Endothelial cell of umbilical vein (primary cell): ENCODE measurements at regions of chr3 and their contacts with region 1.

Region 1: DNA sequence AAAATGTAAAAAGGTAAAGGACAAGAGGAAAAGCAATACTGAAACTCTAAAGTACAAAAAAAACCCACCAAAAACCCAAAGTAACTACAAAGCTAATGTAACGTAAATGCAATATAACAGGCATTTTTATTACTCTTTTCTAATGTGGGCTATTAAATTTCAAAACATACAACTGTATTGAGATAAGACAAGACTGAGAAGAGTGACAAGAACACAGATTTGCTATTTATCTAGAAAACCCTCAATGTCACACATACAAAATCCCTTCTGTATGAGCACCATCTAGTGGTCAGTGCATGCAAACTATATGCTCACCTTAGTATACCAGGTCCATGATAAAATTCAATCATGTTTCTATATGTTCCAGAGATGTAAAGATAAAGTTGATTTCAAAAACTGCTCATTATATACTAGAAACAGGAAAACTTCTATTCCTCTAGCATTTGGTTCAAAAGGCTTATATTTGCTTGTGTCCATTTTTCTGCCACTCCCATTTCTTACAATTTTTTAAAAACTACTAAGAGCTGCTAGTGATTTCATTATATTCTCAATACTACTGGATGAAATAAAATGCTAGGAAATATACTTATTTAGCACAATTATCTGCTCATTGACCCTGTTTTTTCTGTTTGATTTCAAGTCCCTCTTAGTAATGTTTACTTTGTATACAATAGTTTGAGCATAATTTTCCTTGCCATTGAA is 111.4 kb downstream of the DLG1 start:
- DNase-seq: peak; percentile 71
- H3K4me3 ChIP-seq: no peak overlapping the region
- H3K27ac ChIP-seq: no peak overlapping the region
- H3K4me1 ChIP-seq: peaks cover 3% of the 10 kb centered on the region
- H3K27me3 ChIP-seq: no peaks in the 10 kb centered on the region
- CTCF ChIP-seq: peak; percentile 57 to 64
- POLR2A ChIP-seq: no peak

Region 2: DNA sequence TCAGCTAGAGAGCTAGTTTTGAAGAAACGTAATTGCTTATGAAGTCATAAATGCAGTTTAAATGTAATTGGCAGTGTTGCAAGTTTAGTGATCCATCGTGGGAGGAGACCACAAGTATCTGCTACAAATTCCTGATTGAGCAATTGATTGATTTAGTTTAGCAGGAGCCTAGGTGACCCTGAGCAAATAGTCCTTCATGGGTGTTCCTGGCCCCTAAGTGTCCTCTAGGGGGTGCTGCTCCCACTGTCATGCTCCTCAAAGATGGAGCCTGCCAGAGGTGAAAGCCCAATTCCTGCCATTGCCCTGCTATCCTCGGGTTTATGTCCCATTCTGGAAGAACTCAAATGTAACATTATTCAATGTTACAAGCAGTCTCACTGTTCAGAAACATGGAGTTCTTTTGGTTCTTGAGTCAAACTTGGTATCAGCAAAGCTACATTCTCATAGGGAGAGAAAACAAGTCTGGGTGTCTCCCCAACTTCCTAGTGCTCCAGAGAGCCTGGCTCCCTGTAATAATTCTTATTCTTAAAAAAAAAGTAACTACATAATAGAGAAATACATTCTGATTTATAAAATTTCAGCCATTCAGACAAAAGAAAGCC is 349.1 kb before region 1 on chr3:
- CTCF ChIA-PET with region 1: no interaction called
- POLR2A ChIA-PET with region 1: no interaction called
- dilution Hi-C with region 1: no loop called
- intact Hi-C with region 1: loop called (anchors 10 kb)
- DNase-seq: peak; percentile 56
- H3K4me3 ChIP-seq: no peak overlapping the region
- H3K27ac ChIP-seq: no peak overlapping the region
- H3K4me1 ChIP-seq: no peaks in the 10 kb centered on the region
- H3K27me3 ChIP-seq: no peaks in the 10 kb centered on the region
- CTCF ChIP-seq: peak; percentile 82 to 85
- POLR2A ChIP-seq: no peak

Region 3: GRCh38 chr3:197002701-197003454 is 184.2 kb before region 1 on chr3:
- CTCF ChIA-PET with region 1: interaction called, 7 read pairs
- POLR2A ChIA-PET with region 1: no interaction called
- dilution Hi-C with region 1: no loop called
- intact Hi-C with region 1: loop called (anchors 1 kb)
- DNase-seq: peak; percentile 47
- H3K4me3 ChIP-seq: peak overlapping the region; percentile 17 to 61 (median 24)
- H3K27ac ChIP-seq: no peak overlapping the region
- H3K4me1 ChIP-seq: peaks cover 2% of the 10 kb centered on the region
- H3K27me3 ChIP-seq: no peaks in the 10 kb centered on the region
- CTCF ChIP-seq: peak; percentile 62 to 65
- POLR2A ChIP-seq: peak; percentile 38

Region 4: GRCh38 chr3:197175503-197175902 is 11.5 kb before region 1 on chr3:
- CTCF ChIA-PET with region 1: interaction called, 14 read pairs
- POLR2A ChIA-PET with region 1: no interaction called
- dilution Hi-C with region 1: no loop called
- intact Hi-C with region 1: no loop called
- DNase-seq: no peak
- H3K4me3 ChIP-seq: no peak overlapping the region
- H3K27ac ChIP-seq: no peak overlapping the region
- H3K4me1 ChIP-seq: no peaks in the 10 kb centered on the region
- H3K27me3 ChIP-seq: no peaks in the 10 kb centered on the region
- CTCF ChIP-seq: no peak
- POLR2A ChIP-seq: no peak

Region 5: DNA sequence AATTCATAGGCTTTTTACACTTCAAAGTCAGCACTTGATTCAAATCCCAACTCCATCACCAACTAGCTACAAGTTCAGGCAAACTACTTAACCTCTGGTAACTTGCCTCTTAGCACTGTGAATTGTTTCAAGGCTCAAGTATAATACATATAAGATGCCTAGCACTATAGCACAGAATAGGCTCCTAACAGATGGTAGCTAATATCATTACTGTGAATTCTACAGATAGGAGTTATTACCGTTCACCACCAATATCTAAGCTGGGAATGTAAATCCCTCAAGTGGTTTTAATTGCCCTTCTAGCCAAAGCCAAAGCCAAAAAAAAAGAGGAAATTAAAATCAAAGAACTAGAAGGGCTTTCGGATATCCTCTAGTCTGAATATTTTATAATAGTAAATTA is 96.0 kb after region 1 on chr3:
- CTCF ChIA-PET with region 1: no interaction called
- POLR2A ChIA-PET with region 1: no interaction called
- dilution Hi-C with region 1: no loop called
- intact Hi-C with region 1: no loop called
- DNase-seq: no peak
- H3K4me3 ChIP-seq: no peak overlapping the region
- H3K27ac ChIP-seq: no peak overlapping the region
- H3K4me1 ChIP-seq: no peaks in the 10 kb centered on the region
- H3K27me3 ChIP-seq: no peaks in the 10 kb centered on the region
- CTCF ChIP-seq: no peak
- POLR2A ChIP-seq: no peak

Region 6: GRCh38 chr3:197511130-197511529 is 324.1 kb after region 1 on chr3:
- CTCF ChIA-PET with region 1: no interaction called
- POLR2A ChIA-PET with region 1: no interaction called
- dilution Hi-C with region 1: no loop called
- intact Hi-C with region 1: loop called (anchors 1 kb)
- DNase-seq: no peak
- H3K4me3 ChIP-seq: no peak overlapping the region
- H3K27ac ChIP-seq: no peak overlapping the region
- H3K4me1 ChIP-seq: peaks cover 4% of the 10 kb centered on the region
- H3K27me3 ChIP-seq: no peaks in the 10 kb centered on the region
- CTCF ChIP-seq: no peak
- POLR2A ChIP-seq: no peak